ENCODE measurements at regions of chr5 and their contacts with region 1.

Region 1: GRCh38 chr5:139482050-139482889 is at the start of gene STING1:
- DNase-seq: peak; percentile 89 to 93 (median 90)
- ATAC-seq: peak; percentile 74 to 77
- H3K4me3 ChIP-seq: peak within 1 kb of the TSS; percentile 55
- H3K27ac ChIP-seq: peak within 1 kb of the TSS; percentile 98
- H3K4me1 ChIP-seq: peaks cover 3% of the 10 kb centered on the region
- H3K27me3 ChIP-seq: no peaks in the 10 kb centered on the region
- total RNA-seq, gene STING1: 79.7 to 125 (median 93.8) TPM

Region 2: DNA sequence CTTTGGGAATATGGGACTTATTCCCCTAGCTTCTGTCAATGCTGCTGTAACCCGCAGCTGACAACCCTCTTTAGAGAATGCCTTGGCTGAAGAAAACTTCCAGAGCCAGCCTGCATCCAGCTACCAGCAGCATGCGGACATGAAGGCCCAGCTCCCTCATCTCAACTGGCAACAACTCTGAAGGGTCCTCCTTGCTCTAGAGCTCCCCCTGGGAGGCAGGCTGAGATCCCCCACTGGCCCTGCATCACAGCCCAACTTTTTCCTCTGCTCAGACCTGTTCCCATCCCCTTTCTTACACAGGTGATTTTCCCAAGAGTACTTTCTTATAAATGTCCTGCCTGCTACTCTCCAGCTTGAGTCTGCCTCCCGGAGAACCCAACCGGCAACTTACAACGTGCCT is 1417.2 kb before region 1 on chr5:
- intact Hi-C with region 1: no loop called
- DNase-seq: no peak
- ATAC-seq: no peak
- H3K4me3 ChIP-seq: no peak overlapping the region
- H3K27ac ChIP-seq: no peak overlapping the region
- H3K4me1 ChIP-seq: no peaks in the 10 kb centered on the region
- H3K27me3 ChIP-seq: no peaks in the 10 kb centered on the region

Region 3: GRCh38 chr5:138737494-138738265 is 744.6 kb before region 1 on chr5:
- intact Hi-C with region 1: no loop called
- DNase-seq: no peak
- ATAC-seq: no peak
- H3K4me3 ChIP-seq: no peak overlapping the region
- H3K27ac ChIP-seq: no peak overlapping the region
- H3K4me1 ChIP-seq: no peaks in the 10 kb centered on the region
- H3K27me3 ChIP-seq: no peaks in the 10 kb centered on the region

Region 4: DNA sequence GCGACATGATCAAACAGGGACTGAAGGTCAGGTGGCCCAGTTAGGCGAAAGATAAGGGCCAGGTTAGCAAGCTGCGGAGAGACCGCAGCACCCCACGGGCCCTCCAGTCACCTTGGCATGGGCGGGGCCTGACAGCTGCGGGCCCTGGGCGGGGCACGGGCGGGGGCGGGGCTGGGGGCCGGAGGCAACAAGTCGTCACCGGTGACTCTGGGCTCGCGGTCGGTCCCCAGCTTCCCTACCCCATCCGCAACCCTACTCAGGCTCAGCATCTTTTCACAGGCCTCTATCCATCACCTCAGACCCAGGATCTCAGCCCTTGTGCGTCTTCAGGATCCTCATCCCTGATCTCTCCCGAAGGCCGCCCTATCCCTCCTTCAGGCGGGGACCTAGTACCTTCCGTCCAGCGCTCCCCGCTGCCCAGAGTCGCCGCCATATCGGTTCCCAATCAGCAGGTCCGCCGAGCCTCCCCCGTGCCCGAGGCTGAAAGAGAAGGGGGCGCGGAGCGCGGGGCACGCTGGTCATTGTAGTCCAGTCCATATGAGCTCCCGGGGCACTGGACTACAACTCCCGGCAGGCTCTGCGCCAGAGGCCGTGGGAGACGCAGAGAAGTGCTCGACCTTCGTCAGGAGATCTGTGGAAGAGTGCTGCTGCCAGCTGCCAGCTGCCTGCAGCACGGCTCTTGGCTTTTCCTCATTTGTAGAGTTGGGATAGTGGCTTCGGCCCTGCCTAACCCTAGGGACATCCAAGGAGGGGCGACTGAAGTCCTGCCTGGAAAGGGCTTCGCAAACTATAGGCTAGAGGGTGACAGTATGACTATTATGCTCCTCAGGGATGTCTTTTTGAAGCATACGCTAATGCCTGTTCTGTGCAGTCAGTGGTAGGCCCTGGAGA is 43.0 kb before region 1 on chr5 and contains the start of gene DNAJC18:
- intact Hi-C with region 1: loop called in 1 of 4 experiments (anchors 10 kb)
- DNase-seq: peak; percentile 96 to 99 (median 98)
- ATAC-seq: peak; percentile 98 to 99
- H3K4me3 ChIP-seq: peak within 1 kb of the TSS; percentile 95
- H3K27ac ChIP-seq: peak within 1 kb of the TSS; percentile 97
- H3K4me1 ChIP-seq: peaks cover 4% of the 10 kb centered on the region
- H3K27me3 ChIP-seq: no peaks in the 10 kb centered on the region
- total RNA-seq, gene DNAJC18: 14.0 to 24.9 (median 15.2) TPM